ENCODE measurements at regions of chr5 and their contacts with region 1.

Region 1: DNA sequence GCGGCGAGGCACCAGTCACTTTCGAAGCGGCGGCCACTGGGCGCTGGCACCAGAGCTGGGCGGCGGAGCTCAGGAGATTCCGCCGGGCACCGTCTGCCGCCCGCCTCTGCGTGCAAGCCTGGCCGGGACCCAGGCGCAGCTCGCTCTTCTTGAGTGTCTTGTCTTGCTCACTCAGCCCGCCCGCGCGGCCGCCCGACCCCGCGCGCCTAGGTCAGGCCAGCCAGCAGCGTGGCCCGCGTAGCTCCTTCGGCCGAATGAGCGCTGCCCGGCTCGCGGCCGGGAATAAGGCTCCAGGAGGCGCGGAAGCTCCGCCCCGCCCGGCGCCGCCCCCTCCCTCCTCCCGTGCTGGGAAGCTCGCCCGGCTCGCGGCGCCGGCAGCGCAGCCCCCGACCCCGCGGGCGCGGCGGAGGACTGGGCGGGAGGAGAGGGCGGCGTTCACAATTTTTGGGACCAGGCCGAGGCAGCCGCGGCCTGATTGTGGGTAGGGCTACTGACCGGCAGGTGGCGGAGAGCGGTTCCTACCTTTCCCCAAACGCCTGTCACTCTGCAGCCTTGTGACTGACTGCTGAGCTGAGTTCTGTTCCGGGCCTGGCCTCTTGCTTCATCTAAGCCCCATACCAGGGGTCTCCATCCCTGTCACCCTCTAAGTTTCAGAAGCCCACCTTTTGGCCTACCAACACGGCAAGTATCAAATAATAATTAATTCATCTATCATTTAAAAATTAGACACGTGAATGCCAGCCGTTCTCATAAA is at the start of gene HBEGF:
- DNase-seq: no peak
- ATAC-seq: peak; percentile 80
- H3K4me3 ChIP-seq: peak within 1 kb of the TSS; percentile 66; the same call in 1 of the 2 replicates
- H3K27ac ChIP-seq: no peak within 1 kb of the TSS
- H3K4me1 ChIP-seq: peaks cover 28% of the 10 kb centered on the region
- H3K27me3 ChIP-seq: no peaks in the 10 kb centered on the region; a peak in 1 of 4 replicates
- CTCF ChIP-seq: peak; percentile 49 to 65 (median 55)
- EP300 ChIP-seq: no peak
- POLR2A ChIP-seq: peak; percentile 62
- RAD21 ChIP-seq: no peak
- polyA plus RNA-seq, gene HBEGF: 0.87 to 1.5 TPM

Region 2: GRCh38 chr5:140169410-140169809 is 177.1 kb before region 1 on chr5:
- CTCF ChIA-PET with region 1: interaction called, 15 read pairs
- POLR2A ChIA-PET with region 1: no interaction called
- RAD21 ChIA-PET with region 1: interaction called, 5 read pairs
- SMC1A ChIA-PET with region 1: interaction called, 4 read pairs
- in situ Hi-C with region 1: no loop called
- intact Hi-C with region 1: no loop called
- DNase-seq: no peak
- ATAC-seq: peak; percentile 68
- H3K4me3 ChIP-seq: no peak overlapping the region
- H3K27ac ChIP-seq: no peak overlapping the region
- H3K4me1 ChIP-seq: peaks cover 18% of the 10 kb centered on the region
- H3K27me3 ChIP-seq: no peaks in the 10 kb centered on the region
- CTCF ChIP-seq: peak in 1 of 3 experiments; percentile 47; a peak in 2 of 6 replicates
- EP300 ChIP-seq: no peak
- POLR2A ChIP-seq: no peak
- RAD21 ChIP-seq: 0 out of 2 replicates have a peak, but pooled peaks have one; percentile 10

Region 3: GRCh38 chr5:140284013-140284412 is 62.5 kb before region 1 on chr5:
- CTCF ChIA-PET with region 1: interaction called, 10 read pairs
- POLR2A ChIA-PET with region 1: no interaction called
- RAD21 ChIA-PET with region 1: interaction called, 3 read pairs
- SMC1A ChIA-PET with region 1: interaction called, 4 read pairs
- in situ Hi-C with region 1: no loop called
- intact Hi-C with region 1: no loop called
- DNase-seq: no peak
- ATAC-seq: no peak
- H3K4me3 ChIP-seq: no peak overlapping the region
- H3K27ac ChIP-seq: no peak overlapping the region
- H3K4me1 ChIP-seq: peaks cover 13% of the 10 kb centered on the region
- H3K27me3 ChIP-seq: no peaks in the 10 kb centered on the region
- CTCF ChIP-seq: no peak
- EP300 ChIP-seq: no peak
- POLR2A ChIP-seq: no peak
- RAD21 ChIP-seq: no peak

Region 4: DNA sequence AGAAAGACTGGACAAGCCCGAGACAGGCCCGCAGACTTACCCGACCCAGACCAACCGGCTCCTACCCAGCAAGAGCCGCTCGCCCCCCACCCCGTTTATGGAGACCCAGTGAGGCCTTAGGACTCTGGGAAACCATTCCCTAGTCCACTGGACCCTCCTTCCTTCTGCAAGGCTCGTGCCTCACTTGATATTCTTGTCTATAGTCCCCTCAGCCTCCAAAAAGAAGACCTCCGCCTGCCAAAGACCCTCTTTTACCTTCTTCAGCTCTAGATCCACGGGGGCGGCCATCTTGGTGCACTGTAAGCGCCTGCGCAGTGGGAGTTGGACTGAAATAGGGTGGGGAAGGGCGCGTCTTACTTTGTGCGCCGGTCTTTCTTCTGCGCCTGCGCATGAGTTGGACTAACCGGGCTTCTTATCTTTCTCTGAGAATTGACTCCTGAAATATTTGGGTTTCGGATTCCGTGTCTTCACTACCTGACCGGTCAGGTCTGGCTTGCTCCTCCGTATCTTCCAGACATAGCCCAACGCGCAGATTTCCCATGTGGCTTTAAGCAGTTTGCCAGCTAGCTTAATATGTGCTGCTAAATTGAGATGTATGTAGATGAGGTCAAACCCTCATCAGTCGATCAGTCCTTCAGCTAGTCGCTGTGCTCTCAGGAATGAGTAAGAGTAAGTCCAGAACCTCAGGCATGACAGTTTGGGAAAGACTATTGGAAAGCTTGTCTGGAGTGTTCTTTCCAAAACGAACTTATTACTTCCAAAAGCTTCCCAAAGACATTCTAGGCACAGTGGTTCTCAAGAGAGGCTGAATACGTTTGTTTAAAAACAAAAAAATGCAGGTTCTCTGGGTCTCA is 43.5 kb before region 1 on chr5 and contains the start of gene PFDN1:
- CTCF ChIA-PET with region 1: interaction called, 19 read pairs
- POLR2A ChIA-PET with region 1: interaction called, 7 read pairs
- RAD21 ChIA-PET with region 1: interaction called, 7 read pairs
- SMC1A ChIA-PET with region 1: interaction called, 6 read pairs
- in situ Hi-C with region 1: no loop called
- intact Hi-C with region 1: loop called (anchors 5 kb)
- DNase-seq: peak; percentile 76
- ATAC-seq: peak; percentile 97
- H3K4me3 ChIP-seq: peak within 1 kb of the TSS; percentile 90
- H3K27ac ChIP-seq: peak within 1 kb of the TSS; percentile 70
- H3K4me1 ChIP-seq: no peaks in the 10 kb centered on the region
- H3K27me3 ChIP-seq: no peaks in the 10 kb centered on the region
- CTCF ChIP-seq: no peak
- EP300 ChIP-seq: no peak
- POLR2A ChIP-seq: peak; percentile 77
- RAD21 ChIP-seq: no peak
- polyA plus RNA-seq, gene PFDN1: 192 to 193 TPM

Region 5: DNA sequence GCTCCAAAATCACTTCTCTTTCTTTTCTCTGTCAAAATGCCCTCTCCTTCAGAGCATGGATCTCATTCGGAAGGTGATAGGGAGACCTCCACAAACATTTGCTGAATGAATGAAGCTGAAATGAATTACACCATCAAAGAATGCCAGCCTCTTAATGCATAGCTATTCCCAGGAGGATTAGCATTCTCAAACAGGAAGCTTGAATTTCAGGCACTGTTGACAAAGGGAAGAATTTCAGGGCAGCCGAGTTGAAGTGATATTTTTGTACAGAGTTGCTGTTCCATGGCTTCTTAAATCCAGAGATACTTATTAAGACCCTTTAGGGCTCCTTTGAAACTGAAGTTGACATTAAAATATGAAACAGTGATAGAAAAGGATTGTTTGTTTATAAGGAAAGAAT is 18.9 kb before region 1 on chr5:
- CTCF ChIA-PET with region 1: interaction called, 11 read pairs
- POLR2A ChIA-PET with region 1: interaction called, 3 read pairs
- RAD21 ChIA-PET with region 1: interaction called, 8 read pairs
- SMC1A ChIA-PET with region 1: interaction called, 22 read pairs
- in situ Hi-C with region 1: no loop called
- intact Hi-C with region 1: no loop called
- DNase-seq: no peak
- ATAC-seq: no peak
- H3K4me3 ChIP-seq: no peak overlapping the region
- H3K27ac ChIP-seq: no peak overlapping the region
- H3K4me1 ChIP-seq: no peaks in the 10 kb centered on the region
- H3K27me3 ChIP-seq: no peaks in the 10 kb centered on the region
- CTCF ChIP-seq: no peak
- EP300 ChIP-seq: no peak
- POLR2A ChIP-seq: no peak
- RAD21 ChIP-seq: no peak

Region 6: DNA sequence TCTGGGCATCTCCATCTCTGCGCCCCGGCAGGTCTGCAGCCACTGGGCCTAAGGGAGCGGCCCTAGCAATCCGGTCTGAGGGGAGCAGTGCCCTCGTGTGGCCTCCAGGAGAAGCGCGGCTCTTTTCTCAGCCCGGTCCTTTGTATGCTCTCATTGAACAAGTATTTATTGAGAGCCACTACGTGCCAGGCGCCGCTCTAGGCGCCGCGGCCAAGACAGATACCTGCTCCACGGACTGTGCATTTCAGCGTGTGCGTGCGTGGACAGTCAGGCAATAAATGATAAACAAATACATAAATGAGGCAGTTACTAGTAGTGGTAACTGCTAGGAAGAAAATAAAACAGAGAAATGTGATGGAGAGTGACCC is 11.2 kb after region 1 on chr5:
- CTCF ChIA-PET with region 1: interaction called, 25 read pairs
- POLR2A ChIA-PET with region 1: no interaction called
- RAD21 ChIA-PET with region 1: interaction called, 6 read pairs
- SMC1A ChIA-PET with region 1: interaction called, 9 read pairs
- in situ Hi-C with region 1: no loop called
- intact Hi-C with region 1: no loop called
- DNase-seq: no peak
- ATAC-seq: peak; percentile 98
- H3K4me3 ChIP-seq: no peak overlapping the region
- H3K27ac ChIP-seq: no peak overlapping the region
- H3K4me1 ChIP-seq: peaks cover 11% of the 10 kb centered on the region
- H3K27me3 ChIP-seq: no peaks in the 10 kb centered on the region
- CTCF ChIP-seq: peak; percentile 92 to 97 (median 96)
- EP300 ChIP-seq: no peak
- POLR2A ChIP-seq: no peak
- RAD21 ChIP-seq: peak; percentile 85

Region 7: GRCh38 chr5:140753561-140753960 is 407.0 kb after region 1 on chr5:
- CTCF ChIA-PET with region 1: no interaction called
- POLR2A ChIA-PET with region 1: no interaction called
- RAD21 ChIA-PET with region 1: no interaction called
- SMC1A ChIA-PET with region 1: no interaction called
- in situ Hi-C with region 1: no loop called
- intact Hi-C with region 1: no loop called
- DNase-seq: no peak
- ATAC-seq: no peak
- H3K4me3 ChIP-seq: no peak overlapping the region
- H3K27ac ChIP-seq: no peak overlapping the region
- H3K4me1 ChIP-seq: no peaks in the 10 kb centered on the region
- H3K27me3 ChIP-seq: no peaks in the 10 kb centered on the region
- CTCF ChIP-seq: no peak
- EP300 ChIP-seq: no peak
- POLR2A ChIP-seq: no peak
- RAD21 ChIP-seq: no peak

Measured in GM12878 (cell line).